Activated CD8-positive, alpha-beta T cell treated with anti-CD3 and anti-CD28 coated beads for 36 hours (primary cell): ENCODE measurements at regions of chr17 and their contacts with region 1.

Region 1: GRCh38 chr17:50094753-50095619 is at the start of gene PDK2:
- DNase-seq: peak; percentile 95
- ATAC-seq: peak; percentile 93
- H3K4me3 Mint-ChIP-seq: peak within 1 kb of the TSS; percentile 89
- H3K27ac Mint-ChIP-seq: peak within 1 kb of the TSS; percentile 90
- H3K4me1 Mint-ChIP-seq: peaks cover 26% of the 10 kb centered on the region
- H3K27me3 Mint-ChIP-seq: no peaks in the 10 kb centered on the region
- CTCF ChIP-seq: no peak
- total RNA-seq, gene PDK2: 6.0 to 7.7 TPM

Region 2: DNA sequence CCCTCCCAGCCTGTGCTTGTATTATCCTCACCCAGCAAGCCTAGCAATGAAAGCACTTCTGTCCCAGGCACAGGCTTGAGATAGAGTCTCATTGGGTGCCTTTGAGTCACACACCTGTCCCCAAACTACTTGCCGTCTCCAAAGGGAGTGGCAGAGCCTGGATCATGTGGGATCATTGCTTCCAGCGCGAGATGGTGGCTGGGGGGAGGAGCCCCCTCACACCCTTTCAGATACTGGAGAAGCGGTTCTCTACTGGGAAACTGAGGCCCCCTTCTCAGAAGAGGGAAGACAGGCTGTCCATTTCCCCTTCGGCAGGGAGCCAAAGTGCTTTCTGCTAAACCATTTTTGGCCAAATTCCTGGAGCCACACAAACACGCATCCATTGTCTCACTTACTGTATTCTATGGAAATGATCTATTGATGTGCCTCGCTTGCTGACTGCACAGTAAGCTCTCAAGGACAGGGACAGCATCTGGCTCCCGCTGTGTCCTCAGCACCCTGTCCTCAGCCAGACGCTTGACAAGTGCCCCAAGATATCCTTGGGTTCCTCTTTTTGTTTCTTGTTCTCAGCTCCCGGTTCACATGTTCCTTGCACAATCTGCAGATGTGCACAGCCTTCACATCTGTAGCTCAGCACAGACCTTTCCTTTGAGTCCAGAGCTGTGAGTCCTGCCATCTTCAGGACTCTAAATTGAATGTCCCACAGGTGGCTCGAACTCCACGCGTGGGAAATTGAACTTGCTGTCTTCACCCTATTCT is 74.0 kb before region 1 on chr17:
- CTCF ChIA-PET with region 1: interaction called, 69 read pairs
- POLR2A ChIA-PET with region 1: no interaction called
- intact Hi-C with region 1: no loop called
- DNase-seq: no peak
- ATAC-seq: no peak
- H3K4me3 Mint-ChIP-seq: no peak overlapping the region
- H3K27ac Mint-ChIP-seq: no peak overlapping the region
- H3K4me1 Mint-ChIP-seq: no peaks in the 10 kb centered on the region
- H3K27me3 Mint-ChIP-seq: peaks cover 12% of the 10 kb centered on the region
- CTCF ChIP-seq: no peak

Region 3: GRCh38 chr17:50055426-50056230 is 39.4 kb before region 1 on chr17 and contains the start of gene ITGA3:
- CTCF ChIA-PET with region 1: interaction called, 60 read pairs
- POLR2A ChIA-PET with region 1: interaction called, 4 read pairs
- intact Hi-C with region 1: no loop called
- DNase-seq: peak; percentile 68
- ATAC-seq: peak; percentile 45
- H3K4me3 Mint-ChIP-seq: peak within 1 kb of the TSS; percentile 82
- H3K27ac Mint-ChIP-seq: peak within 1 kb of the TSS; percentile 14
- H3K4me1 Mint-ChIP-seq: peaks cover 21% of the 10 kb centered on the region
- H3K27me3 Mint-ChIP-seq: peaks cover 3% of the 10 kb centered on the region
- CTCF ChIP-seq: no peak
- total RNA-seq, gene ITGA3: 4.2 to 7.2 TPM

Region 4: GRCh38 chr17:50114849-50115357 is 19.9 kb after region 1 on chr17:
- CTCF ChIA-PET with region 1: interaction called, 23 read pairs
- POLR2A ChIA-PET with region 1: interaction called, 5 read pairs
- intact Hi-C with region 1: no loop called
- DNase-seq: peak; percentile 75
- ATAC-seq: peak; percentile 69
- H3K4me3 Mint-ChIP-seq: no peak overlapping the region
- H3K27ac Mint-ChIP-seq: no peak overlapping the region
- H3K4me1 Mint-ChIP-seq: peaks cover 12% of the 10 kb centered on the region
- H3K27me3 Mint-ChIP-seq: peaks cover 29% of the 10 kb centered on the region
- CTCF ChIP-seq: peak; percentile 63

Region 5: DNA sequence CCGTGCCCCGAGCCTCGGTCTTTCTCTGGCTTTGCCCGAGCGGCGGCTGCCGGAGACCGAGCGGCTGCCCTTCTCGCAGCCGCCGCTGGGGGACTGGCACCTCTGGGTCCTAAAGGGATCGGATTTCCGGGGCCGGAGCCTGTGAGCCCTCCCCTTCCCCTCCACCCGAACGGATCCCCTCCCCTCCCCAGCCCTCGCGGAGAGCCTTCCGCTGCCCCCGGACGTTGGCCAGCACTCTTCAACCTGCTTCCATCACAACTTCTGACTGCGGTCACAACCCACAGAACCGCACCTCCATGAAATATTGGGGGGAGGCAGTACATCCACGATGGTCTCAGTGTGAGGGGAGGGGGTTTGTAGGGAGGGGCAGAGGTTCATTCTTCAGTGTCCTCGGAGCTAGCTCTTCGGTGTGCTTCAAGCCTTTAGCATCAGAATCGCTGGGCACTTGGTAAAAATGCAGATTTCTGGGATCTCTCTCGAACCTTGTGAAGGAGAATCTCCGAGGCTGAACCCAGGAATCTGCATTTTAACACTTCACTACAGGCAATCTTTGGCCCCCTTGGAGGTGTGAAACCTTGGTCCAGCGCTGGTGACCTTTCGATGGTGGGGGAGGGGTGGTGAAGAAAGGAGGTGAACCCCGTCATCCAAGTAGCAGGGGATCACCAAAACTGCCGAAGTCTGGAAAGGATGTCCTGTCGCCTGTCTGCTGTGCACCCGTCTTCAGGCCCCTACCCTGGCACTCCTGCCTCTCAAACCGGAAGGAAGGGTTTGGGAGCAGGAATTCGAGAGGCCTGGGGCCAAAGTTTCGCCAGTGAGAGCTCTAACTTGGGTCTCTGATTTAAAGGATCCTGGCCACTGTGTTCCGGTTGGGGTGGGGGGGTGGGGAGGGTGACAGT is 56.3 kb after region 1 on chr17:
- CTCF ChIA-PET with region 1: interaction called, 49 read pairs
- POLR2A ChIA-PET with region 1: interaction called, 4 read pairs
- intact Hi-C with region 1: no loop called
- DNase-seq: peak; percentile 94
- ATAC-seq: peak; percentile 75
- H3K4me3 Mint-ChIP-seq: peak overlapping the region; percentile 82
- H3K27ac Mint-ChIP-seq: peak overlapping the region; percentile 96
- H3K4me1 Mint-ChIP-seq: peaks cover 41% of the 10 kb centered on the region
- H3K27me3 Mint-ChIP-seq: no peaks in the 10 kb centered on the region
- CTCF ChIP-seq: no peak

Region 6: GRCh38 chr17:50177983-50178834 is 83.2 kb after region 1 on chr17:
- CTCF ChIA-PET with region 1: interaction called, 10 read pairs
- POLR2A ChIA-PET with region 1: no interaction called
- intact Hi-C with region 1: no loop called
- DNase-seq: peak; percentile 70
- ATAC-seq: peak; percentile 93
- H3K4me3 Mint-ChIP-seq: no peak overlapping the region
- H3K27ac Mint-ChIP-seq: peak overlapping the region; percentile 2
- H3K4me1 Mint-ChIP-seq: peaks cover 6% of the 10 kb centered on the region
- H3K27me3 Mint-ChIP-seq: no peaks in the 10 kb centered on the region
- CTCF ChIP-seq: peak; percentile 42

Region 7: GRCh38 chr17:50297407-50297865 is 202.4 kb after region 1 on chr17:
- CTCF ChIA-PET with region 1: interaction called, 28 read pairs
- POLR2A ChIA-PET with region 1: no interaction called
- intact Hi-C with region 1: no loop called
- DNase-seq: peak; percentile 87
- ATAC-seq: peak; percentile 100
- H3K4me3 Mint-ChIP-seq: no peak overlapping the region
- H3K27ac Mint-ChIP-seq: no peak overlapping the region
- H3K4me1 Mint-ChIP-seq: no peaks in the 10 kb centered on the region
- H3K27me3 Mint-ChIP-seq: peaks cover 2% of the 10 kb centered on the region
- CTCF ChIP-seq: peak; percentile 98